GM10248 (cell line): ENCODE measurements at regions of chr1 and their contacts with region 1.

Region 1: DNA sequence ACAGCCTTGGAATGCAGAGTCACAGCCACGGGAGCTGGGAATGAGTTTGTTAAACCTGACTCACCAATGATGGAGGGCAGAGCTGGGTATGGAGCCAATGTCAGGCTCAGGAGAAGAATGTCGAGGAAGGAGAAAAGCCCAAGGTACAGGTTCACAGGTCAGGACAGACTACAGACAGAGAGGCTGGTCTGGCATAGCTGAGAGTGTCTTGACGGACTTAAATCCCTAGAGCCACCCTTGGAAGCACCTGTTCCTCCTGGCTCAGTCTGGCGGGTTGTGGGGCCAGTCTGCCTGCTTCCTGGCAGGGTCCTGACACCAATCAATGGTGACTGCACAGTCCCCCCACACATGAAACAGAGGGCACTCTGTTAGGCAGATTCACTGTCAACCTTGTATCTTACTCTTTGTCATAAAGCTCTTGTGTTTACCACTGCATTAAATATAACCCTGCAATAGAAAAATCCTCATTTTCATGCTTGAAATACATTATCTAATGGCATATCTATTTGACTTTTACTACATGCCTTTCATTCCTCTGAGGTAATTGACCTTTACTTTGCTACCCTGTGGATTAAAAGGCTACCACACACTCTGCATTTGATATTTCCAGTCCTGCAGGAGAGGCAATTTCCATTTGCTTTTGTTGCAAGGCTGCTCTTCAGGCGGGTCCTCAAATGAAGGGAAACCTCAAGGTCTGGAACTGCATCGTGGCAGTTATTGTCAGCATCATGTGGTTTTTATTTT is 237.9 kb downstream of the NTNG1 start:
- DNase-seq: no peak
- CTCF ChIP-seq: no peak

Region 2: DNA sequence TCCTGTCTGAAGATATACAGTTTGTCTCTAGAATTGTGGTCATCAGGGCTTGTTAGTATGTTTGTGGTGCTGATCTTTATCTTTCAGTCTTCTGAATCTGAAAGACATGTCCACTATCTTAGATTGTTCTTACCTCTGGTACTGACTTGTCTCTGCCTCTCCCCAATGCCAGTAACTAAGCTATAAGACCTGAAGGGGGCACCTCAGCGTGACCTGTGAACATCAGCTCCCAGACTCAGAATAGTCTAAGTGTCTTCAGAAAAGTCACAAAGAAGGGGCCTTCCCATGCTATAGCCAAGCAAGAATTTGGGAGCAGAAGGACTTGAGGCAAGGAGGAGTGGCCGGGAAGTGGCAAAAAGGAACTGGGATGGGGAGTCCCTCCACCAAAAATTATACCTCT is 59.8 kb before region 1 on chr1:
- CTCF ChIA-PET with region 1: no interaction called
- POLR2A ChIA-PET with region 1: no interaction called
- DNase-seq: no peak
- CTCF ChIP-seq: peak; percentile 14

Region 3: DNA sequence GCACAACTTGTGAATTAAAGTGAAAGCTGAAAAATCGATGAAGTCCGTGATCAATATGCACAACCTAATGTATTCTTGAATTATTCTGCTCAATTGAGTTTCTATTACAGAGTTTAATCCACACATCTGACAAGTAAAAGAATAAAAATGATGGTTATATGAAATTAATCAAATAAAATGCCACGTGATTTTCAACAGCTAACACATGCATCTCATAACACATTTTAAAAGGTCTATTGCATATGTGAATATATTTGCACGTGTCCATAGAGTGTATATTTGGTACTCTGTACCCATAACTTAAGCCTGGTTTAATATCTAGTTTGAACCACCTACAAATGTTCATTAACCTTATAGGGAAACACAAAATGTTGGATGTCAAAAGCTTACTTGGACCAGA is 28.3 kb after region 1 on chr1:
- CTCF ChIA-PET with region 1: interaction called, 10 read pairs
- POLR2A ChIA-PET with region 1: no interaction called
- DNase-seq: no peak
- CTCF ChIP-seq: no peak